SK-N-SH (cell line): ENCODE measurements at regions of chr5 and their contacts with region 1.

Region 1: GRCh38 chr5:134101686-134102439 is 12.6 kb upstream of the TCF7 start:
- DNase-seq: peak; percentile 85
- H3K4me3 ChIP-seq: no peak overlapping the region; a peak in 1 of 4 replicates
- H3K27ac ChIP-seq: peak overlapping the region in 1 of 2 experiments; percentile 67; a peak in 2 of 4 replicates
- H3K4me1 ChIP-seq: peaks cover 13 to 71% of the 10 kb centered on the region in 2 experiments
- H3K27me3 ChIP-seq: no peaks in the 10 kb centered on the region
- CTCF ChIP-seq: peak; percentile 75
- EP300 ChIP-seq: no peak
- RAD21 ChIP-seq: peak; percentile 63

Region 2: DNA sequence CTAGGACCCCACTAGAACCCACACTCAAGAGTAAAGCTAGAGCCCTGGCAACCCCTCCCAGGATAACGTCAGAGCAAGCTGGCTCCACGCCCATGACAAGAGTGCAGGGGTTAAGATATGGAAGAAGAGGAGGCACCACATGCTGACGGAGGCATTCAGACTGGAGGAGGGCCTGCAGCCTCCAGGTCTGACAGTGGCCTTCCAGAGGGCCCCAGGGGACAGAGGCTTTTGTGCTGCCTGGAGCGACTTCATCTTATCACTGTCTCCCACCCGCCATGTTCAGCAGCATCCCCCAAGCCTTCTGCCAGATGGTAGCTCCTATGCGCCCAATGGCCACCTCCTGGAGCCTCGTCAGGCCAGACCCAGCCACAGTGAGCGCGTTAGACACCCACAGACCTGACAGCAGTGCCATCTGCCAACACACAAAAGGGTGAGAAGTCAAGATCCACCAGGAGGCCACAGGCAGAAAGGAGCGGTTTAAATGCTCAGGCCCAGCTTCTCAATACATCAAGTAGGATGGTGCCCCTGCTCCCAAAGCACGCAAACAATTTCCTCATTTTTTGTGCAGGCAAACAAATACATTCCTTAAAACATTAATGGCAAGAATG is 199.2 kb before region 1 on chr5:
- CTCF ChIA-PET with region 1: no interaction called
- POLR2A ChIA-PET with region 1: no interaction called
- DNase-seq: no peak
- H3K4me3 ChIP-seq: no peak overlapping the region
- H3K27ac ChIP-seq: no peak overlapping the region
- H3K4me1 ChIP-seq: peaks cover 0 to 52% of the 10 kb centered on the region in 2 experiments; a peak in 2 of 4 replicates
- H3K27me3 ChIP-seq: no peaks in the 10 kb centered on the region
- CTCF ChIP-seq: no peak
- EP300 ChIP-seq: no peak
- RAD21 ChIP-seq: no peak

Region 3: DNA sequence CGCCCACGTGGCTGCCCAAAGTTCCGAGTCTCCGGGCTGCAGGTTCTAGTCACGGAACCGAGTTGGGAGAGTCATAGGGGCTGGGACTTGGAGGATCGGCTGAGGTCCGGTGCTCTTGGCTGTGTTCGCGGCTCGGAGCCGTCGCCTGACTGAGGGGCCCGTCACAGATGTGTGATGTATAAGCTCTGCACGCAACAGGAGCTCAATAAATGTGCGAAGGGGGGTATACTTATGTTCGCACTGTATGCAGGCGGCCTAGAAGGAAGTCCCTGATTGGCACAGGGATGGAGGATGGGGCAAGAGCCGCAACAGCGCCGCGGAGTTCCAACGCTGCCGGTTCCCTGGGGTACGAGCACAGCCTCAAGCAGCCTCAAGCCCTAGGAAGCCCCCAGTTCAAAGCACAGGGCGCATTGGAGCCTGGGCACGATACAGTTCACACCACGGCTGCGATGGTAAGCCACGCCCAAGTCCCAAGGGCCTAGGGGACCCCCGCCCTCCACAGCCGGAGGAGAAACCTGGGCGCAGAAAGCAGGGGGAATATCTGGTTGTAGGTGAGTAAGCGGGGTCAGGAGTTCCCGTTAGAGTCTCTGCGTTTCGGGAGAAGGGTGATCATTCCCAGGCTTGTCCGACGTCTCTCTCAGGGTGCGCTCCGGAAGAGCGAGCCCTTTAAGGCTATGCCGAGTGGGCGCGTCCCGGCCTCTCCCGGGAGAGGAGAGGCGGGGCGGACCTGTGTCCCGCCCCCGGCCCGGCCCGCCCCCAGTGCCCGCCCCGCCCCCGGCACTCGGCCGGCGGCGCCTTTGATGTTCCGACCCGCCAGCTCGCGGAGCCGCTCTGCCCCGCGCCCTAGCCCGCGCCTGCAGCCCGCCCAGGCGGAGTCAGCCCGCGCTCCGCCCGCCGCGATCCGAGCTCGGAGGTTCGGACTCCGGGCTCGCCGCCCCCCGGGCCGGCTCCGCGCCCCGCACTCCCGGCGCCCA is 12.3 kb after region 1 on chr5 and contains the start of gene TCF7:
- CTCF ChIA-PET with region 1: interaction called, 15 read pairs
- POLR2A ChIA-PET with region 1: no interaction called
- DNase-seq: peak; percentile 99
- H3K4me3 ChIP-seq: peak within 1 kb of the TSS; percentile 57 to 70
- H3K27ac ChIP-seq: peak within 1 kb of the TSS in 1 of 2 experiments; percentile 91; a peak in 2 of 4 replicates
- H3K4me1 ChIP-seq: peaks cover 0 to 68% of the 10 kb centered on the region in 2 experiments; a peak in 2 of 4 replicates
- H3K27me3 ChIP-seq: no peaks in the 10 kb centered on the region
- CTCF ChIP-seq: no peak
- EP300 ChIP-seq: no peak
- RAD21 ChIP-seq: no peak
- polyA plus RNA-seq, gene TCF7: 2.3 and 2.7 TPM in 2 replicates

Region 4: DNA sequence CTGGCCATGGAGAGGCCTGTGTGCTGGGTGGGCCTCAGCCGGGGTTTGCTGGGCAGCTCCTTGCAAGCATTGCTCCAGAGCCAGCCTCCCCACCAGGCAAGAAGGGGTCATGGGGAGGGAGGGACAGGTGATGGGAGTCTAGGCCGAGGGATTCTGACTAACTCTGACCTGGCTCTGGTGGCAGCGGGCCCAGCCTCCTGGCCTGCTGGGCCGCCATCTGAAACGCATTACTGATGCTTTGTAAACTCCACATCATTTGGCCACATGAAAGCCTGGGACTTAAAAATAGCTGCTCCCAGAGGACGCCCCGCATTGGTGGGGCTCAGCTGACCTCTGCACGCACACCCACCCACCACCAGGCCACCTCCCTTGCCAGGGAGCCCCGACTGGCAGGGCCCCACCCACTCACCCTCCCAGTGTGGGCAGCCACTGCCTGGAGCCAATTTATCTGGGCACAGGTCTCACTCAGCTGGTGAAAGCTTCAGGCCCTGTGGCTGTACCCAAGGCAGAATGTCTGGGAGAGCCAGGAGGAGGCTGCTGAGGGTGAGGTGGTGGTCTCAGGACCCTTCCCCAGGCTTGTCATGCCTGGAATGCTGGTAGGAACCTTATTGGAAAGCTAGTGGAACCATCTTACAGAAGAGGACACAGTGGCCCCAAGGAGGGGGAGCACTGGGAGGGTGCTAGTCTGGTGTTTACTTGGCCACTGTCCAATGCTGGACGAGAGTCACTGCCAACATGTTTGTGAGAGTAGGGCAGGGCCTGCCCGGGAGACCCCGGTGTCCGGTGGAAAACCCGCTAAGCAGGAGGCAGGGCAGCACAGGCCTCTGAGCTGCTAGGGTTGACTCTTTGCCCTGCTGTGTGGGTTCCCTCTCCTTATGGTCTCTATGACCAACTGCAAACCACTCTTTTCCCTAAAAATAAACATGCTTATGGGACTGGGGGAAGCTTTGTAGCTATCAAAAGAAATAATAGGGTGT is 23.5 kb after region 1 on chr5:
- CTCF ChIA-PET with region 1: interaction called, 12 read pairs
- POLR2A ChIA-PET with region 1: interaction called, 15 read pairs
- DNase-seq: peak; percentile 82
- H3K4me3 ChIP-seq: no peak overlapping the region
- H3K27ac ChIP-seq: peak overlapping the region; percentile 88 to 97
- H3K4me1 ChIP-seq: peaks cover 31 to 85% of the 10 kb centered on the region in 2 experiments
- H3K27me3 ChIP-seq: no peaks in the 10 kb centered on the region
- CTCF ChIP-seq: no peak
- EP300 ChIP-seq: peak in 1 of 2 experiments; percentile 75; a peak in 2 of 4 replicates
- RAD21 ChIP-seq: no peak

Region 5: DNA sequence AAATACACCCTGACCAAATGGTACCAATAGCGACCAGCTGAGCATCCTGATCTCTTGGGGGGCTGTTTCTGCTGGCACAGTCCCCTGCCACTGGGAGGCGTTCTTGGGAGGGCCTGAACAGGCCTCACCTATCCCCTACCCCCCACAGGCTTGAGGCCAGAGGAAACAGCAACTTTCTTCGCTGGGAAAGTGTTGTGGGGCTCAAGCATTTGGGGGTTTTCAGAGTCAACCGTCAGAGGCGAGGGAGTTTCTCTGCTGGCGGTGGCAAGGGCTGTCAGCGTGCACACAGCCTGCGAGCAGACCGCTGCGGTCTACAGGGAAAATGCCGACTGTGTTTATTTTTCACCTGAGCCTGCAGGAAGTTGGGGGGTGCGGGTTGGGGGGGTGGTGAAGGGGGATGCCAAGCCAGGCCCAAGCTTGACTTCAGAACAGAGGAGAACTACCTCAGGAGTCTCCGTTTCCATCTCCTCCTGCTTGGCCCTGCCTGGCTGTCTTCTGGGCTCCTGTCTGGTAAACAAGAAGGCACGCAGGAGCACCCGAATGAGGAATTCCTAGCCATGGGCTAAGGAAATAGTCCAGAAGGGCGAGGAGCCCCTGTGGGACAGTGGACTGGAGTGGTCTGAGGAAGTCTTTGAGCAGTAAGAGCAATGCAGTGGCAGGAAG is 30.6 kb after region 1 on chr5:
- CTCF ChIA-PET with region 1: interaction called, 12 read pairs
- POLR2A ChIA-PET with region 1: no interaction called
- DNase-seq: no peak
- H3K4me3 ChIP-seq: no peak overlapping the region
- H3K27ac ChIP-seq: peak overlapping the region in 1 of 2 experiments; percentile 39; a peak in 1 of 4 replicates
- H3K4me1 ChIP-seq: peaks cover 7 to 69% of the 10 kb centered on the region in 2 experiments; a peak in 2 of 4 replicates
- H3K27me3 ChIP-seq: no peaks in the 10 kb centered on the region
- CTCF ChIP-seq: no peak
- EP300 ChIP-seq: no peak
- RAD21 ChIP-seq: no peak